Endothelial cell of umbilical vein (primary cell): ENCODE measurements at regions of chr6 and their contacts with region 1.

Region 1: DNA sequence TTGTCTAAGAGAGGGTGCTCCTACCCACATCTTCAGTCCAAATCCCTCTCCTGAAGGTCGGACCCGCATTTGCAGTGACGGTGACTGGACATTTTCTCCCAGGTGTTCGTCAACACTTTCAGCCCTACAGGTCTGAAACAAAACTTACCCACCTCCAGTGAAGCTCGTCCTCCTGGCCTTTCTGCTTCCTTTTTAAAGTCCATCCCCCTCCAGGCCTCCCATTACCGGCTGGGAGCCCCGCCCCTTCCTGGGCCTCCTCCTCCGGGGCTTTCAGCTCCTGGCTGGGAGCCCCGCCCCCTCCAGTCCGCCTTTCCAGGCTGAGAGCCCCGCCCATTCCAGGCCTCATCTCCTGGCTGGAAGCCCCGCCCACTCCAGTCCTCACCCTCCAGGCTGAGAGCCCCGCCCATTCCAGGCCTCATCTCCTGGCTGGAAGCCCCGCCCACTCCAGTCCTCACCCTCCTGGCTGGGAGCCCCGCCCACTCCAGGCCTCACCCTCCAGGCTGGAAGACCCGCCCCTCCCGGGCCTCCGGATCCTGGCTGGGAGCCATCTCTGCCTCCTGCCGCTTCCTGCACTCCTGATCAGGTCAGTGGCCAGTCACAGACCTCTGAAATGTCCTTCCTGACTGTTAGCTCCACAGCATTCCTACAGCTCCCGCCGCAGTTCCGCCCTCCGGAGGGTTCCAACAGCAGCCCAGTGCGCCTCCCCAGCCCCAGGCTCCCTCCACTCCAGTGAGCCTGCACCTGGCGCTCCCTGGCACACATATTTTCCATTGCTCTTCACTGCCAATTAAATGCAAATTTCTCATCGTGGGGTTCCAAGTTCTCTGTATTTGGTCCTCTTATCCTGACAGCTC is 98.5 kb downstream of the LY86 start:
- DNase-seq: peak; percentile 96
- H3K4me3 ChIP-seq: no peak overlapping the region
- H3K27ac ChIP-seq: peak overlapping the region; percentile 36
- H3K4me1 ChIP-seq: peaks cover 43% of the 10 kb centered on the region
- H3K27me3 ChIP-seq: peaks cover 8 to 10% of the 10 kb centered on the region in 2 experiments
- CTCF ChIP-seq: no peak
- POLR2A ChIP-seq: no peak

Region 2: DNA sequence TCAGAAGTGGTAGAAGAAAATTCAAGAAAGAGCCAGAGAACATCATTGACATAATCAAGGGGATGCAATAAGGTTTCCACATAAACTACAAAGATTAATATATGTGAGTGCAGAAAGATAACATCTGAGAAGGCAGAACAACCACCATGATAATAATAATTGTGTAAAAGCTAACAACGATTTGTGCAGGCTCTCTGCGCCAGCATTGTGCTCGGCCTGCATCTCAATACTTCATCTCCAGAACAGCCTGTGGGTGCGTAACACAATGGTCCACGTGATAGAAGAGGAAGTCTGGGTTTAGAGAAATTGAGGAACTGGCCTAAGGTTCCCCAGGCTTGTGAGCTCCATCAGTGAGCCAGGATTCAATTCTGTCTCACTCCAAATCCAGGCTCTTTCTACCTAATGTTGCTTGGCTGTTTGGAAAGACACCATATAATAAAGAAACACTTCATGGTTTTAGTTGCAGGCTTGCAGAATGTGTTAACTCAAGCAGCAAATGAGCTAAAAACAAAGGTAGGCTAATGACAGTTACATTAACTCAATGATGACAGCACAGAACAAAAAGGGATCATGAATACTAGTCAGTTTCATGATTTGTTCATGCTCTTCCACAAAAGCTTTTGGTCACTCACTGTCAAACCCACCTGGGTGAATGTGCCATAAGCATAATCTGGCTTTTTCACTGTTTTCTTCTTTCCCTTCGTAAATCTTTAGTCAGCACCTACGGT is 27.2 kb before region 1 on chr6:
- CTCF ChIA-PET with region 1: no interaction called
- POLR2A ChIA-PET with region 1: no interaction called
- dilution Hi-C with region 1: no loop called
- intact Hi-C with region 1: loop called (anchors 1 kb)
- DNase-seq: no peak
- H3K4me3 ChIP-seq: no peak overlapping the region
- H3K27ac ChIP-seq: no peak overlapping the region
- H3K4me1 ChIP-seq: peaks cover 11% of the 10 kb centered on the region
- H3K27me3 ChIP-seq: no peaks in the 10 kb centered on the region
- CTCF ChIP-seq: no peak
- POLR2A ChIP-seq: no peak

Region 3: DNA sequence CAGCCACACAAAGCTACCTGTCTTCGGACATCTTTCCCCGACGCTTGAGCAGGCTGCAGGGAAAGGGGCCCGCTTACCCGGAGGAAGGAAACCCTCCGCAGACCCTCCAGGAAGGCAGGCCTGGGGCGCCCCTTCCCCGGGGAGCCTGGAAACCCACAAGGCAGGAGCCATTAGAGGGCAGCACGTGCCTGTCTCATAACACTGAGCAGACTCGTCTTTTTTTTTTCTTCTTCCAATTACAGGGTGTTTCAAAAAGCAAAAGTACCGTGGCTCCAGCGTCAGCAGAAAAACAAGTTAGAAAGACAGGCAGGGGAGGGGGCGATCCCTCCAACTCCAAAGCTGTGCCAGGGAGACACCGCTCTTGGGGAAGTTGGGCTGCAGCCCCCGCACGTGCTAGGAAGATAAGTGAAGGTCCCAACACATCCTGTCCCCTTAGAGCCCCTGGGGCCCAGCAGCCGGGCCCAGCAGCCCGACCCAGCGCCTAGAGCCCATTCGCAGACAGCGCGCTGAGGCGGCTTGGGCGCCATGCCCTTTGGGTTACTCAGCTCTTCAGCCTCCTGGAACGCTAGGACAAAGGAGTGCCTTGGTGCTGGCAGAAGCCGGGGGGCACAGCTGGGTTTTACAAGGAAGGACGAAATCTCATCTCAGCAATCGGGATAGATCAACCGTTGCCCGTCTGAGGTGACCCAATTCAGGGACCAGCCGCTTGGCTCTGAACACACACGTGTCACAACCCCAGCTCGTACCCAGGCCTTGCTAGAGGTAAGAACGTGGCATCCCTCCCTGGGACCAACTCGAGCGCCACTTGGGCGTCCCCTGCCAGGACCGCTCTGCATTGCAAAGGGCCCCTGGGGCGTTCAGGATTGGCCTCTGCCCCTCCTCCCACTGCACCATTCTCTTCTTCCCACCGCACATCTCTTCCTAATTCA is 37.8 kb after region 1 on chr6:
- CTCF ChIA-PET with region 1: interaction called, 10 read pairs
- POLR2A ChIA-PET with region 1: no interaction called
- dilution Hi-C with region 1: no loop called
- intact Hi-C with region 1: loop called (anchors 2 kb)
- DNase-seq: peak; percentile 83
- H3K4me3 ChIP-seq: peak overlapping the region in 1 of 3 experiments; percentile 16
- H3K27ac ChIP-seq: peak overlapping the region; percentile 59
- H3K4me1 ChIP-seq: peaks cover 19% of the 10 kb centered on the region
- H3K27me3 ChIP-seq: peaks cover 0 to 2% of the 10 kb centered on the region in 2 experiments
- CTCF ChIP-seq: peak; percentile 57 to 60
- POLR2A ChIP-seq: no peak

Region 4: GRCh38 chr6:6826095-6826901 is 139.3 kb after region 1 on chr6:
- CTCF ChIA-PET with region 1: no interaction called
- POLR2A ChIA-PET with region 1: no interaction called
- dilution Hi-C with region 1: no loop called
- intact Hi-C with region 1: loop called (anchors 5 kb)
- DNase-seq: peak; percentile 91
- H3K4me3 ChIP-seq: no peak overlapping the region
- H3K27ac ChIP-seq: peak overlapping the region; percentile 48
- H3K4me1 ChIP-seq: peaks cover 16% of the 10 kb centered on the region
- H3K27me3 ChIP-seq: peaks cover 0 to 2% of the 10 kb centered on the region in 2 experiments
- CTCF ChIP-seq: no peak
- POLR2A ChIP-seq: no peak

Region 5: DNA sequence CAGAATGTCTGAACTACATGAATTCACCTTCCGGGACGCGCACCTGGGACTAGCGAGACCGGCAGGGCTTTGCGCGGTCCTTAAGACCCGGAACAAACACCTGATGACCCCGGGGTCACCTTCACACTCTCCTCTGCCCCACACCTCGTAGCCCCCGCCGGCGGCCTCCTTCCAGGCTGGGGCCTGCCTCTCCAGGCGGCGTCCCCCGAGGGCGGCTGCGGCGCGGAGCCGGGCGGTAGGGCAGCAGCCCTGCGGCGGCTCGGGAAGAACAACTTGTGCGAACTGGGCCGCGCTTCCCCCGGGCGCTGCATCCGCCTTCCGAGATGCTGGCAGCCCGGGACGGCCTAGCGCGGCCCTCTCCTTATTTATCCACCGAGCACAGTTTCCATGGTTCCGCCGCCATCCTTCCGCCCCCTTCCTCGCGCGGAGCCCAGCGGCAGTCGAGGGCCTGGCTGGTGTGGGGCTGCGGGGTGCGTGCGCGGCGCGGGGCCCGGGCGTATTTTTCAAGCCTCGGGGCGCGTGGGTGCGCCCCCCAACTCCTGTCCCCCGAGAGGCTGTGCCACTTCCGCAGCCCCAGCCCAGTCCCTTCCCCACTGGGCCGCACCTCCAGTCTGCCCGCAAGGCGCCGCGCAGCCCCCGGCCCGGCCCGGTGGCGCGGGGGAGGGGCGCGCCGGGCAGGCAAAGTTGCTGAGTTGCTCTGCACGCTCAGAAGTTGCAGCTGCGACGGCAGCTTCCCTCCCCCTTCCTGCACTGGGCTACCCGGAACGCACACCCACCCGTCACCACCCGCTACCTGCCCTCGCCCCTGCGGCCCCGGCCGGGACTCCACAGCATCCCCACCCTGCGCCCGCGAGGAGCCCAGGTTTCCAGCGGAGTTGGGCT is 364.5 kb after region 1 on chr6:
- CTCF ChIA-PET with region 1: no interaction called
- POLR2A ChIA-PET with region 1: no interaction called
- dilution Hi-C with region 1: no loop called
- intact Hi-C with region 1: loop called (anchors 5 kb)
- DNase-seq: peak; percentile 34
- H3K4me3 ChIP-seq: peak overlapping the region; percentile 48 to 63 (median 62)
- H3K27ac ChIP-seq: no peak overlapping the region
- H3K4me1 ChIP-seq: peaks cover 9% of the 10 kb centered on the region
- H3K27me3 ChIP-seq: no peaks in the 10 kb centered on the region
- CTCF ChIP-seq: no peak
- POLR2A ChIP-seq: no peak

Region 6: GRCh38 chr6:7140631-7141378 is 453.8 kb after region 1 on chr6:
- CTCF ChIA-PET with region 1: no interaction called
- POLR2A ChIA-PET with region 1: no interaction called
- dilution Hi-C with region 1: no loop called
- intact Hi-C with region 1: loop called (anchors 5 kb)
- DNase-seq: peak; percentile 73
- H3K4me3 ChIP-seq: peak overlapping the region; percentile 59 to 60 (median 60)
- H3K27ac ChIP-seq: peak overlapping the region; percentile 71
- H3K4me1 ChIP-seq: peaks cover 28% of the 10 kb centered on the region
- H3K27me3 ChIP-seq: no peaks in the 10 kb centered on the region
- CTCF ChIP-seq: no peak
- POLR2A ChIP-seq: peak; percentile 51